ENCODE measurements at regions of chr13 and their contacts with region 1.

Region 1: DNA sequence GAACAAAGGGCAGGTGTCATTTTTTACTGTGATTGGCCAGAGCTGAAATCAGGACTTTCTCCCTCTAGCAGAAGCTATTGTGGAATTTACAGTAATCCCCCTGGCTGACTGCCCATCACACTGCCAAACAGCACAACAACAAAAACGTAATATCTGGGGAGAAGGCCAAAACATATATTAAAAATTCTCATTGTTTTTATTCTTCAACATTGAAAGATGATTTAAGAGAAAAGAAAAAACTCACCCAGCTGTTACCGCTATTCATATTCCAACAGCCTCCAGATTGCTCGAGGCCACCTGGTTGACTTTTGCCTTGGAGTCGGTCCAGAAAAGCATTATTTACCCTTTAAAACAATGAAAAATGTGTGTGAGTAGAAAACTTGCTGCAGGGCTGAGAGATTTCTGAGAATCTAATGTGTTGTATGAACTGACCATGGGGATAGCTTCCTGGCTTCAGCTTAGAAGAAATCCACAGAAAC is 97.2 kb downstream of the EPSTI1 start:
- DNase-seq: no peak
- ATAC-seq: no peak
- H3K4me3 ChIP-seq: no peak overlapping the region
- H3K27ac ChIP-seq: no peak overlapping the region
- H3K4me1 ChIP-seq: no peaks in the 10 kb centered on the region
- H3K27me3 ChIP-seq: no peaks in the 10 kb centered on the region

Region 2: GRCh38 chr13:42969558-42970172 is 74.9 kb after region 1 on chr13:
- intact Hi-C with region 1: loop called in 1 of 4 experiments (anchors 10 kb)
- DNase-seq: peak; percentile 79 to 90 (median 88)
- ATAC-seq: peak; percentile 83 to 88
- H3K4me3 ChIP-seq: no peak overlapping the region
- H3K27ac ChIP-seq: no peak overlapping the region
- H3K4me1 ChIP-seq: peaks cover 2% of the 10 kb centered on the region
- H3K27me3 ChIP-seq: no peaks in the 10 kb centered on the region

Measured in right cardiac atrium (tissue), 5 donors.